HCT116 (cell line): ENCODE measurements at regions of chr5 and their contacts with region 1.

Region 1: DNA sequence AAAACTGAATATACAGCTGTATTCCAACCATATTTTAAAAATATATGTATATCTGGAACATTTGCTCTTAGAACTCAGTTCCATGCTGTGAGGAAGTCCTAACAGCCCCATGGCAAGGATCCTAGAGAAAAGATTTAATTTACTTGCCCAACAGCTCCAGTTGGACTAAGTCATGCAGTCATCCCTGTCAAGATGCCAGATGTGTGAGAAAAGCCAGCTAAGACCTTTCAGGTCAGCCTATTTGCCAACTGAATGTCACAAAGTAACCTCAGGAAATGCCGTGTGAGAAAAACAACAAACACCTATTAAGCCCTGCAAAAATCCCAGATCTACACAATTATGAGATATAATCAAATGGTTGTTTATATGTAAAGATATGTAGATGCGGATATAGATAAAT is 416.3 kb downstream of the NR2F1-AS1 start:
- DNase-seq: peak; percentile 87
- ATAC-seq: 0 out of 2 replicates have a peak, but pooled peaks have one; percentile 28
- H3K4me3 ChIP-seq: no peak overlapping the region
- H3K27ac ChIP-seq: peak overlapping the region; percentile 95
- H3K4me1 ChIP-seq: peaks cover 55 to 62% of the 10 kb centered on the region in 2 experiments
- H3K27me3 ChIP-seq: no peaks in the 10 kb centered on the region
- CTCF ChIP-seq: no peak
- POLR2A ChIP-seq: no peak
- RAD21 ChIP-seq: peak; percentile 28

Region 2: GRCh38 chr5:92552206-92553160 is 612.2 kb before region 1 on chr5:
- CTCF ChIA-PET with region 1: no interaction called
- POLR2A ChIA-PET with region 1: no interaction called
- RAD21 ChIA-PET with region 1: no interaction called
- intact Hi-C with region 1: loop called (anchors 5 kb)
- DNase-seq: peak; percentile 89
- ATAC-seq: peak; percentile 80
- H3K4me3 ChIP-seq: peak overlapping the region in 1 of 2 experiments; percentile 47; a peak in 3 of 4 replicates
- H3K27ac ChIP-seq: peak overlapping the region; percentile 96
- H3K4me1 ChIP-seq: peaks cover 29 to 45% of the 10 kb centered on the region in 2 experiments
- H3K27me3 ChIP-seq: no peaks in the 10 kb centered on the region
- CTCF ChIP-seq: no peak
- POLR2A ChIP-seq: no peak
- RAD21 ChIP-seq: peak; percentile 37

Region 3: GRCh38 chr5:92930057-92930456 is 234.6 kb before region 1 on chr5:
- CTCF ChIA-PET with region 1: no interaction called
- POLR2A ChIA-PET with region 1: no interaction called
- RAD21 ChIA-PET with region 1: no interaction called
- intact Hi-C with region 1: no loop called
- DNase-seq: no peak
- ATAC-seq: no peak
- H3K4me3 ChIP-seq: no peak overlapping the region
- H3K27ac ChIP-seq: no peak overlapping the region
- H3K4me1 ChIP-seq: peaks cover 12 to 22% of the 10 kb centered on the region in 2 experiments
- H3K27me3 ChIP-seq: no peaks in the 10 kb centered on the region
- CTCF ChIP-seq: no peak
- POLR2A ChIP-seq: no peak
- RAD21 ChIP-seq: no peak

Region 4: DNA sequence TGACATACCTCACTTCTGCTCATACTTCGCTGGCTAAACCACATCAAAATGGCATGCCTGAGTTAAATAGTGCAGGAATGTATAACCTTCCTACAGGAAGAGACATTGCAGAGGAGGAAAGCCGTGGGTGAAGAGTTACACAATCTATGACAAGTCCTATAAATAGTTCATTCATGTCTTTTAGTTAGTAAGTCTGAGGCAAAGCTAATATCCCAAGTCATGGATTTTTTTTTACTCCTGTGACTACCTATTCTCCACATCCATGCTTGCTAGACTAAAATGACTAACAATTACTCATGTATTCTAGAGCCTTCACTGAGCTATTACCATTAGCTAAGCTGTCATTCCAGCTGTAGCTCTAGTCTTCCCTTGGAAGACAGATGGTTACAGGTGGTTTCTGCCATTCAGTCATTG is 25.0 kb after region 1 on chr5:
- CTCF ChIA-PET with region 1: no interaction called
- POLR2A ChIA-PET with region 1: interaction called, 6 read pairs
- RAD21 ChIA-PET with region 1: interaction called, 3 read pairs
- intact Hi-C with region 1: loop called (anchors 2 kb)
- DNase-seq: peak; percentile 78
- ATAC-seq: peak; percentile 58
- H3K4me3 ChIP-seq: peak overlapping the region in 1 of 2 experiments; percentile 5; a peak in 1 of 4 replicates
- H3K27ac ChIP-seq: peak overlapping the region; percentile 92
- H3K4me1 ChIP-seq: peaks cover 72 to 88% of the 10 kb centered on the region in 2 experiments
- H3K27me3 ChIP-seq: no peaks in the 10 kb centered on the region
- CTCF ChIP-seq: no peak
- POLR2A ChIP-seq: no peak
- RAD21 ChIP-seq: no peak; the same call in 1 of the 2 replicates

Region 5: GRCh38 chr5:93596676-93597461 is 432.2 kb after region 1 on chr5:
- CTCF ChIA-PET with region 1: no interaction called
- POLR2A ChIA-PET with region 1: no interaction called
- RAD21 ChIA-PET with region 1: no interaction called
- intact Hi-C with region 1: no loop called
- DNase-seq: peak; percentile 51
- ATAC-seq: peak; percentile 99
- H3K4me3 ChIP-seq: no peak overlapping the region
- H3K27ac ChIP-seq: peak overlapping the region; percentile 33
- H3K4me1 ChIP-seq: peaks cover 15 to 17% of the 10 kb centered on the region in 2 experiments
- H3K27me3 ChIP-seq: no peaks in the 10 kb centered on the region
- CTCF ChIP-seq: peak; percentile 42 to 51 (median 42); a peak in 5 of 6 replicates
- POLR2A ChIP-seq: no peak
- RAD21 ChIP-seq: peak; percentile 68